HepG2 (cell line): ENCODE measurements at regions of chr13 and their contacts with region 1.

Region 1: GRCh38 chr13:67736646-67737420 is 506.7 kb upstream of the PCDH9 start:
- DNase-seq: peak; percentile 5
- ATAC-seq: peak; percentile 73
- H3K4me3 ChIP-seq: no peak overlapping the region
- H3K27ac ChIP-seq: no peak overlapping the region
- H3K4me1 ChIP-seq: no peaks in the 10 kb centered on the region
- H3K27me3 ChIP-seq: no peaks in the 10 kb centered on the region
- CTCF ChIP-seq: 0 out of 2 replicates have a peak, but pooled peaks have one; percentile 13
- EP300 ChIP-seq: no peak
- POLR2A ChIP-seq: no peak
- RAD21 ChIP-seq: no peak

Region 2: DNA sequence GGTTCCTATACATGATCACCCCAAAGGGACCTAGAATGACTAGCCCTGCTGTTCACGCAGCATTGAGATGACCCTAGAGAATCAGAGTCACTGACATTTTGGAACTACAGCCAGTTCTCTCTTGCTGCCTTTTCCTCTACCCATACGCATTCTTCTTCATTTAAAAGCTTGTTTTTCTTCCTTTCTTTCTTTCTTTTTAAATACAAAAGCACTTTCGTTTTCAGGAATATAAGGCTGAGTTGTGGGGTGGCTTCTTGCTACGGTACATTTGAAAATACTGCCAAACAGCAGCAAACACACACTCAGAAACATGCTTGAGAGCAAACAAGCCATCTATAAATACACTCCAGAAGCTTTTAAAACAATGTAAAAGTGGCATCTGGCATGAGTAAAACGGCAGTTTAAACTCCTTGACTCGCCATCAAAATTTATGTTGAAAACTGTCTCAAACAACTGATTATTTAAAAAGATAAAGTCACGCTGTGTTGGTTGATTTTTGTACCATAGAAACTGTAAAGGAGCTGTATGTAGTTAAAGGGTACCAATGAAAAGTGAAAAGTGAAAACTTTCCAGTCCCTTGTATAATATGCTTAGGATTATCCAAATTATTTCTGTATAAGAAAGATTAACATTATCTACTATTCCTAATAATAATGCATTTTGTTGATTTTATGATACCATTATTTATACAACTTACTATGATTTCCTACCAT is 602.3 kb before region 1 on chr13:
- CTCF ChIA-PET with region 1: no interaction called
- POLR2A ChIA-PET with region 1: no interaction called
- in situ Hi-C with region 1: no loop called
- intact Hi-C with region 1: no loop called
- DNase-seq: no peak
- ATAC-seq: no peak
- H3K4me3 ChIP-seq: no peak overlapping the region
- H3K27ac ChIP-seq: no peak overlapping the region
- H3K4me1 ChIP-seq: no peaks in the 10 kb centered on the region
- H3K27me3 ChIP-seq: no peaks in the 10 kb centered on the region
- CTCF ChIP-seq: no peak
- EP300 ChIP-seq: no peak
- POLR2A ChIP-seq: no peak
- RAD21 ChIP-seq: no peak

Region 3: DNA sequence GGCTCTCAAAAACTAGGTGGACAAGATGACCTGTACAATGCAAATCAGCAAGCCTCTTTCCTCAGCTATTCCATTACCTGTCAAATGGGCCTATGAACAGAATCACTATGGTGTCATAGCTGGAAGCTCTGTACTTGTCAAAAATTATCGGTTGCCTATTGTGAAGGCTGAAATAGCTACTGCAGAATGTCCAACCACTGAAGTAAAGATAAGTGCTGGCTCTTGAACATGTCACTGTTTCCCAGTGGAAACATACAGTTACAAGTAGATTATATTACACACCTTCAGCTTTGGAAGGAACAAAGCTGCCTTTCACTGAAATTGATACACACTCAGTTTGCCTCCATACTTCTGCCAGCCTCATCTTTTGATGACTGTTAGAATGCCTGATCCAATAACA is 451.2 kb before region 1 on chr13:
- CTCF ChIA-PET with region 1: no interaction called
- POLR2A ChIA-PET with region 1: no interaction called
- in situ Hi-C with region 1: no loop called
- intact Hi-C with region 1: no loop called
- DNase-seq: no peak
- ATAC-seq: no peak
- H3K4me3 ChIP-seq: no peak overlapping the region
- H3K27ac ChIP-seq: no peak overlapping the region
- H3K4me1 ChIP-seq: peaks cover 17% of the 10 kb centered on the region
- H3K27me3 ChIP-seq: no peaks in the 10 kb centered on the region; a peak in 1 of 5 replicates
- CTCF ChIP-seq: no peak
- EP300 ChIP-seq: no peak
- POLR2A ChIP-seq: no peak
- RAD21 ChIP-seq: no peak

Region 4: GRCh38 chr13:67827992-67828391 is 91.2 kb after region 1 on chr13:
- CTCF ChIA-PET with region 1: no interaction called
- POLR2A ChIA-PET with region 1: no interaction called
- in situ Hi-C with region 1: no loop called
- intact Hi-C with region 1: no loop called
- DNase-seq: no peak
- ATAC-seq: no peak
- H3K4me3 ChIP-seq: no peak overlapping the region
- H3K27ac ChIP-seq: no peak overlapping the region
- H3K4me1 ChIP-seq: no peaks in the 10 kb centered on the region
- H3K27me3 ChIP-seq: no peaks in the 10 kb centered on the region
- CTCF ChIP-seq: no peak
- EP300 ChIP-seq: no peak
- POLR2A ChIP-seq: no peak
- RAD21 ChIP-seq: no peak

Region 5: GRCh38 chr13:68927387-68928026 is 1190.7 kb after region 1 on chr13:
- CTCF ChIA-PET with region 1: no interaction called
- POLR2A ChIA-PET with region 1: no interaction called
- in situ Hi-C with region 1: no loop called
- intact Hi-C with region 1: loop called (anchors 5 kb)
- DNase-seq: peak; percentile 12
- ATAC-seq: peak; percentile 93
- H3K4me3 ChIP-seq: no peak overlapping the region
- H3K27ac ChIP-seq: no peak overlapping the region
- H3K4me1 ChIP-seq: no peaks in the 10 kb centered on the region
- H3K27me3 ChIP-seq: no peaks in the 10 kb centered on the region
- CTCF ChIP-seq: peak; percentile 71
- EP300 ChIP-seq: no peak
- POLR2A ChIP-seq: no peak
- RAD21 ChIP-seq: no peak

Region 6: GRCh38 chr13:69324090-69324886 is 1587.5 kb after region 1 on chr13:
- CTCF ChIA-PET with region 1: no interaction called
- POLR2A ChIA-PET with region 1: no interaction called
- in situ Hi-C with region 1: no loop called
- intact Hi-C with region 1: loop called (anchors 2 kb)
- DNase-seq: peak; percentile 3
- ATAC-seq: no peak
- H3K4me3 ChIP-seq: no peak overlapping the region
- H3K27ac ChIP-seq: no peak overlapping the region
- H3K4me1 ChIP-seq: no peaks in the 10 kb centered on the region
- H3K27me3 ChIP-seq: no peaks in the 10 kb centered on the region
- CTCF ChIP-seq: peak; percentile 26
- EP300 ChIP-seq: no peak
- POLR2A ChIP-seq: no peak
- RAD21 ChIP-seq: no peak